ENCODE measurements at regions of chr15 and their contacts with region 1.

Region 1: GRCh38 chr15:40763801-40764732 is at the start of gene GCHFR:
- DNase-seq: peak; percentile 71
- H3K4me3 Mint-ChIP-seq: peak within 1 kb of the TSS; percentile 78
- H3K27ac Mint-ChIP-seq: peak within 1 kb of the TSS; percentile 90
- H3K4me1 Mint-ChIP-seq: peaks cover 18% of the 10 kb centered on the region
- H3K27me3 Mint-ChIP-seq: no peaks in the 10 kb centered on the region
- total RNA-seq, gene GCHFR: 43.7 and 44.7 TPM in 2 replicates

Region 2: DNA sequence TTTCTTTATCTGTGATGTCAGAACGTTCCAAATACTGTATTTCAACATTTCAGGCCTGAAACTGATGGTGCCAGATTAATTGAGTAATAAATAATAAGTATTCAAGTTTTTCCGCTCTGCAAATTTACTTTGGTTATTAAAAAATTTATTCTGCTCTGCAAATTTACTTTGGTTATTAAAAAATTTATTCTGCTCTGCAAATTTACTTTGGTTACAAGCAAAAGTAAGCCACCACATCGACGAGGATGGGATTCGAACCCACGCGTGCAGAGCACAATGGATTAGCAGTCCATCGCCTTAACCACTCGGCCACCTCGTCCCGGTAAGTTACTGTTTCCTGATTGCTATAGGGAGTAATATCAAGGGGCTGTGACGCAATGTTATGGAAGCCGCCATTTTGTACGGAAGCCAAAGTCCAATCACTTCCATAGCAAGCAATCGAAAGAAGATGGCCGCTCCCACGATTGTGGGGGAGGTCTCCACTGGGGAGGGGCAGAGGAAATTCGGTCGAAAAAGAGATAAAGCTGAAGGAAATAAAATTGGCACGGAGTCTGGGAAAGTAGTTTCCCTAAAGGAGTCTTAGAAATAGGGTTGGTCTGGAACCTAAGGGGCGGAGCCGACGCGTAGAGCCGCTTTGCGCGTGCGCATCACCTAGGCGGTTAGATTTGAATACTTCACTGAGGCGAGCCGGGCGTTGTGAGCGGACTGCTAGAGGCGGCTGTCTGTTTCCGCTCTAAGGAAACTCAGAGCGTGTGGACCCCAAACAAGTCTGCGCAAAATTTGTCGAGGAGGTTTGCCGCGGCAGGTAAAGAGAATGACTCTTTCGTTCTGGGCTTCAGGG is 170.3 kb before region 1 on chr15 and contains the start of gene KNL1:
- intact Hi-C with region 1: loop called (anchors 10 kb)
- DNase-seq: peak; percentile 90
- H3K4me3 Mint-ChIP-seq: peak within 1 kb of the TSS; percentile 93
- H3K27ac Mint-ChIP-seq: peak within 1 kb of the TSS; percentile 99
- H3K4me1 Mint-ChIP-seq: peaks cover 24% of the 10 kb centered on the region
- H3K27me3 Mint-ChIP-seq: no peaks in the 10 kb centered on the region
- total RNA-seq, gene KNL1: 30.6 and 30.8 TPM in 2 replicates

Measured in activated T-helper 2 cell treated with anti-CD3 and anti-CD28 coated beads, Interferon-gamma antibody, Interleukin-2, Interleukin-4, amounts not matched to agents 10 μg/mL and 5 μg/mL and 100 μg/mL, durations not matched to agents 14 hours and 24 hours and 36 hours (primary cell).